ENCODE measurements at regions of chr2 and their contacts with region 1.

Region 1: GRCh38 chr2:100427628-100428258 is 10.3 kb upstream of the CHST10 start:
- DNase-seq: peak; percentile 49
- ATAC-seq: peak; percentile 97
- H3K4me3 ChIP-seq: no peak overlapping the region
- H3K27ac ChIP-seq: no peak overlapping the region
- H3K4me1 ChIP-seq: no peaks in the 10 kb centered on the region; a peak in 1 of 4 replicates
- H3K27me3 ChIP-seq: no peaks in the 10 kb centered on the region
- CTCF ChIP-seq: peak; percentile 46 to 62 (median 52); a peak in 4 of 6 replicates
- POLR2A ChIP-seq: no peak
- RAD21 ChIP-seq: peak; percentile 56

Region 2: GRCh38 chr2:100852999-100853908 is 425.5 kb after region 1 on chr2:
- CTCF ChIA-PET with region 1: no interaction called
- POLR2A ChIA-PET with region 1: no interaction called
- RAD21 ChIA-PET with region 1: no interaction called
- intact Hi-C with region 1: no loop called
- DNase-seq: no peak
- ATAC-seq: peak; percentile 55; the same call in 1 of the 2 replicates
- H3K4me3 ChIP-seq: no peak overlapping the region
- H3K27ac ChIP-seq: no peak overlapping the region
- H3K4me1 ChIP-seq: peaks cover 0 to 27% of the 10 kb centered on the region in 2 experiments; a peak in 3 of 4 replicates
- H3K27me3 ChIP-seq: no peaks in the 10 kb centered on the region
- CTCF ChIP-seq: peak in 2 of 3 experiments; percentile 12 to 23; a peak in 1 of 6 replicates
- POLR2A ChIP-seq: no peak
- RAD21 ChIP-seq: peak; percentile 45

Region 3: GRCh38 chr2:100984892-100985379 is 557.2 kb after region 1 on chr2:
- CTCF ChIA-PET with region 1: no interaction called
- POLR2A ChIA-PET with region 1: no interaction called
- RAD21 ChIA-PET with region 1: no interaction called
- intact Hi-C with region 1: loop called (anchors 10 kb)
- DNase-seq: peak; percentile 64
- ATAC-seq: peak; percentile 86
- H3K4me3 ChIP-seq: no peak overlapping the region
- H3K27ac ChIP-seq: no peak overlapping the region
- H3K4me1 ChIP-seq: peaks cover 7 to 9% of the 10 kb centered on the region in 2 experiments
- H3K27me3 ChIP-seq: no peaks in the 10 kb centered on the region
- CTCF ChIP-seq: peak; percentile 83 to 87 (median 85)
- POLR2A ChIP-seq: no peak
- RAD21 ChIP-seq: peak; percentile 92

Measured in HCT116 (cell line).